ENCODE measurements at regions of chr1 and their contacts with region 1.

Region 1: DNA sequence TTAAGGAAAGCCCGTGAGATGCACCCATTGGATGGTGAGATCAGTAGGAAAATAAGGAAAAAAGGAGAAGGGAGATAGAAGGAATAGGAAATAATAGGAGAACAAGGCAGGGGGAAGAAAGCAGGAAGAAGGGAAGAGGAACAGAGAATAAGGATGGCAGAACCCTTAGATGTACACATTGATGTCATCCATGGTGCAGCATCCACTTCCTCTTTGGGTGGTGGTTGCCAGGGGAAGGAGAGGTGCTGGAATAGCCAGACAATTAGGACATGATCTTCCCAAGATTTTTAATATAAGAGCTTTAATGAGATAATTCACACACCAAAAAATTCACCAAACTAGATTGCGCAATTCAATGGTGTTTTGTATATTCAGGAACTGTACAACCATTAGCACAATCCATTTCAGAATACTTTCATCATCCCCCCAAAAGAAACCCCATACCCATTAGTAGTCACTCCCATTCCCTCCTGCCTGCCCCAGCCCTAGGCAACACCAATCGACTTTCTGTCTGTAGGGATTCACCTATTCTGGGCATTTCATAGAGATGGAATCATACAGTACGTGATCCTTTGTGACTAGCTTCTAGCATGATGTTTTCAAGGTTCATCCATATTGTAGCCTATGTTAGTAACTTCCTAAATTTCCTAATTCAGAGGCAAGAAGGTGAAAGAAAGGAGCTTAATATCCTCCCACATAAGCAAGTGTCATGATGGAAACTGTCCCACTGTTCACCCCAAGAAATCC is 121.4 kb downstream of the PLXNA2 start:
- DNase-seq: no peak
- H3K4me3 ChIP-seq: no peak overlapping the region
- H3K27ac ChIP-seq: no peak overlapping the region
- H3K4me1 ChIP-seq: no peaks in the 10 kb centered on the region
- H3K27me3 ChIP-seq: no peaks in the 10 kb centered on the region
- CTCF ChIP-seq: no peak

Region 2: GRCh38 chr1:208074353-208074752 is 48.4 kb before region 1 on chr1:
- CTCF ChIA-PET with region 1: no interaction called
- dilution Hi-C with region 1: no loop called
- in situ Hi-C with region 1: no loop called
- intact Hi-C with region 1: loop called (anchors 2 kb)
- DNase-seq: no peak
- H3K4me3 ChIP-seq: no peak overlapping the region
- H3K27ac ChIP-seq: no peak overlapping the region
- H3K4me1 ChIP-seq: peaks cover 3% of the 10 kb centered on the region
- H3K27me3 ChIP-seq: no peaks in the 10 kb centered on the region
- CTCF ChIP-seq: no peak

Region 3: GRCh38 chr1:208081972-208082371 is 40.8 kb before region 1 on chr1:
- CTCF ChIA-PET with region 1: no interaction called
- dilution Hi-C with region 1: loop called (anchors 5 kb)
- in situ Hi-C with region 1: no loop called
- intact Hi-C with region 1: no loop called
- DNase-seq: no peak
- H3K4me3 ChIP-seq: no peak overlapping the region
- H3K27ac ChIP-seq: no peak overlapping the region
- H3K4me1 ChIP-seq: peaks cover 6% of the 10 kb centered on the region
- H3K27me3 ChIP-seq: no peaks in the 10 kb centered on the region
- CTCF ChIP-seq: no peak

Region 4: GRCh38 chr1:208888376-208888775 is 765.6 kb after region 1 on chr1:
- CTCF ChIA-PET with region 1: no interaction called
- dilution Hi-C with region 1: no loop called
- in situ Hi-C with region 1: no loop called
- intact Hi-C with region 1: no loop called
- DNase-seq: no peak
- H3K4me3 ChIP-seq: no peak overlapping the region
- H3K27ac ChIP-seq: no peak overlapping the region
- H3K4me1 ChIP-seq: no peaks in the 10 kb centered on the region
- H3K27me3 ChIP-seq: no peaks in the 10 kb centered on the region
- CTCF ChIP-seq: no peak